ENCODE measurements at regions of chr12 and their contacts with region 1.

Region 1: GRCh38 chr12:111405149-111405860 is 418 bp upstream of the SH2B3 start:
- DNase-seq: peak; percentile 99
- H3K4me3 Mint-ChIP-seq: peak overlapping the region; percentile 73
- H3K27ac Mint-ChIP-seq: peak overlapping the region; percentile 94
- H3K4me1 Mint-ChIP-seq: peaks cover 52% of the 10 kb centered on the region
- H3K27me3 Mint-ChIP-seq: peaks cover 4% of the 10 kb centered on the region

Region 2: GRCh38 chr12:111322336-111323250 is 82.7 kb before region 1 on chr12:
- CTCF ChIA-PET with region 1: no interaction called
- POLR2A ChIA-PET with region 1: no interaction called
- intact Hi-C with region 1: no loop called
- DNase-seq: no peak
- H3K4me3 Mint-ChIP-seq: no peak overlapping the region
- H3K27ac Mint-ChIP-seq: no peak overlapping the region
- H3K4me1 Mint-ChIP-seq: no peaks in the 10 kb centered on the region
- H3K27me3 Mint-ChIP-seq: no peaks in the 10 kb centered on the region

Region 3: DNA sequence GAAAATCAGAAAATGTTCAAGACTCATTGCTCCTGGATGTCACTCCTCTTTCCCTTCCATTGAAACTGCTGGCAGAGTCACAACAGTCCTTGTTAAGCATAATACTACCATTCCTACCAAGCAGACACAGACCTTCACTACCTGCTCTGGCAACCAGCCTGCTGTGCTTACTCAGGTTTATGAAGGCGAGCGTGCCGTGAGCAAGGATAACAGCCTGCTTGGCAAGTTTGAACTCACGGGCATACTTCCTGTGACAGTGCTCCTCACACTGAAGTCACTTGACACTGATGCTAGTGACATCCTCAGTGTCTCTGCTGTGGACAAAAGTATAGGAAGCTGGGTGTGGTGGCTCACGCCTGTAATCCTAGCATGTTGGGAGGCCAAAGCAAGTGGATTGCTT is 20.7 kb before region 1 on chr12:
- CTCF ChIA-PET with region 1: no interaction called
- POLR2A ChIA-PET with region 1: no interaction called
- intact Hi-C with region 1: no loop called
- DNase-seq: no peak
- H3K4me3 Mint-ChIP-seq: no peak overlapping the region
- H3K27ac Mint-ChIP-seq: no peak overlapping the region
- H3K4me1 Mint-ChIP-seq: no peaks in the 10 kb centered on the region
- H3K27me3 Mint-ChIP-seq: peaks cover 5% of the 10 kb centered on the region

Region 4: DNA sequence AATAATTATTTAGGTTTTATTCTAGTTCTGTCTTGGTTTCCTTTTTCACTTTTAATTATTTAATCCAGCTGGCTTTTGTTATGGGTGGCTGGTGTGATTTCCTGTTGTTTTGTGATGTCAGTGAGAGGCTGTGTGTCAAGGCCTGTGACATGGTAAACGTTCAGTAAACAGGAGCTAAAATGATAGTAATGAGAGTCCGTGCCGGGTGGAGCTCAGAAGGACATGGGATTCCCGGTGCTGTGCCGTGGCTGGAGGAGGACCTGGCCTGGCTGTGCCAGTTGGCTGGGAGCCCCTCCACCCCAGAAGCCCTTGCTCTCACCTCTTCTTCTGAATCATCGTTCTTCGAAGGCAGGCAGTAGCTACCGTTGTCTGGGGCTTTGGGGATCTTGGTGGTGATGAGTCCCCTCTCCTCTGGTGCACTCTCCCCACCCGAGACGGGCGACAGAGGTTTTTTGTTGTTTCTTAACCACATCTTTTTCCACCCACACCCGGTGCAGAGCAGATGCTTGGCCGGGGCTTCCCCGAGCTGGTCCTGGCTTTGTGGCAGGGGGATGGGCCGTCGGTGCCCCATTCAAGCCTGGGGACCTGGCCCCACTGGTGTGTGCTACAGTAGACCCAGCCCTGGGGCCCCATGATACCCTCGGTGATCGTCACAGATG is 29.5 kb after region 1 on chr12:
- CTCF ChIA-PET with region 1: interaction called, 1,161 read pairs
- POLR2A ChIA-PET with region 1: interaction called, 28 read pairs
- intact Hi-C with region 1: loop called (anchors 1 kb)
- DNase-seq: peak; percentile 91
- H3K4me3 Mint-ChIP-seq: peak overlapping the region; percentile 61
- H3K27ac Mint-ChIP-seq: peak overlapping the region; percentile 92
- H3K4me1 Mint-ChIP-seq: peaks cover 89% of the 10 kb centered on the region
- H3K27me3 Mint-ChIP-seq: no peaks in the 10 kb centered on the region

Region 5: DNA sequence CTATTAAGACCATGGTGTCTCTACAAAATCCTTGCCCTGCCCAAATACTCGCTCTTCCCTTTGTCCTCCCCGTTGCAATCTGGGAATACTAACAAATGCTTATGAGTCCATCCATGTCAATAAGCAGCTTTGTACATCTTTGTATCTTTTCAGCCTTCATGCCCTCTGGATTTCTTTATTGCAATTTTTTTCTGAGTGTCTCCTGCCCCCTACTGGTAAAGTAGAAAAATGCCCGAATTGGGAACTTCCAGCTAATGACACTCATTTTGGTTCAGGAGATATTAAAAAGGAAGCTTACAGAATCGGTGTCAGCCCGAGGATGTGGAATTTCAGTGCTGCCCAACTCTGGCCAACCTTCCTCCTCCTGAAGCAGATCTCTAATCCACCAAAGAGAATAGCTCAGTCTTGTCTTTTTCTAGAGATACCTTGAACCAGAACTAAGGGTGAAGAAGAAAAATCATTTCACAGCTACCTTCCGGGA is 46.4 kb after region 1 on chr12:
- CTCF ChIA-PET with region 1: interaction called, 1,161 read pairs
- POLR2A ChIA-PET with region 1: interaction called, 91 read pairs
- intact Hi-C with region 1: loop called (anchors 1 kb)
- DNase-seq: no peak
- H3K4me3 Mint-ChIP-seq: no peak overlapping the region
- H3K27ac Mint-ChIP-seq: peak overlapping the region; percentile 4
- H3K4me1 Mint-ChIP-seq: peaks cover 42% of the 10 kb centered on the region
- H3K27me3 Mint-ChIP-seq: no peaks in the 10 kb centered on the region

Region 6: DNA sequence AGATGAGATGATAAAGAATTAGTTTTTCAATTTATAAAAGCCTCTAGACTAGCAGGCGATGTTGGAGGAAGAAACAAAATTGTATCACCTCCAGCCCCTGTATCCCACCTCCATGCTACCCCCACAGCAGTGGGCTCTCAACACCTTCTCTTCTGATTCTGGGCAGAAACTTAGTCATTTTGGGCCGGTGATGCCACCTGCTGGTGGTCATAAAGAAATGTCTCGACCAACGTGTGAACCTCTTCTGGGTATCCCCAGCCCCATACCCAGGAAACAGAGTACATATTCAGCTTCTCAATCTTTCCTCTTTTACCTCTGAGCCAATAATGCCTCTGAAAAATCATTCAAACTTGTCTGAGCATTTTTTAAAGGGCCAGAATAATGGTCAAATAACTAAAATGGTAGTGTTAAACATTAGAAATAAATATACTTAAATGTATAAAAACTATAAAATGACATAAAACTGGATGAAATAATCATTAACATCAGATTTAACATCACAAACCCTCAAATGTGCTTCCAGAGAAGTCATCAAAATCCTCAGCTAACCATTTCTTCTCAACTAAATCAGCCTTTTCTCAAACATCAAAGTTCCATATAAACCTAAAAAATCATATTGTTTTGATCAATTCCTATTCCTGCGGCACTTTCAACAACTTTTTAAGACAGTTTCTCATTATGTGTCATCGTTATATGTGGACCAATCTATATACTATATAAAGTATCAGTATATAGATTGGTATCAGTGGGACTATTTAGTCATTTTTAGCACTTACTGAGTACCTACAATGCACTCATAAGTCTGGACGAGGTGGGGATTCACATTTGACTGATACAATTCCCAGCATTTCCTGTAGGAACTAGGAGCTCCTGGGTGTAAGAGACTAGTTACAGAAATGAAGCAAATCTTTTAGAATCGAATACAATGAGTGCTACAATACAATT is 124.4 kb after region 1 on chr12:
- CTCF ChIA-PET with region 1: interaction called, 3 read pairs
- POLR2A ChIA-PET with region 1: no interaction called
- intact Hi-C with region 1: loop called (anchors 1 kb)
- DNase-seq: peak; percentile 78
- H3K4me3 Mint-ChIP-seq: no peak overlapping the region
- H3K27ac Mint-ChIP-seq: peak overlapping the region; percentile 44
- H3K4me1 Mint-ChIP-seq: peaks cover 12% of the 10 kb centered on the region
- H3K27me3 Mint-ChIP-seq: no peaks in the 10 kb centered on the region

Region 7: DNA sequence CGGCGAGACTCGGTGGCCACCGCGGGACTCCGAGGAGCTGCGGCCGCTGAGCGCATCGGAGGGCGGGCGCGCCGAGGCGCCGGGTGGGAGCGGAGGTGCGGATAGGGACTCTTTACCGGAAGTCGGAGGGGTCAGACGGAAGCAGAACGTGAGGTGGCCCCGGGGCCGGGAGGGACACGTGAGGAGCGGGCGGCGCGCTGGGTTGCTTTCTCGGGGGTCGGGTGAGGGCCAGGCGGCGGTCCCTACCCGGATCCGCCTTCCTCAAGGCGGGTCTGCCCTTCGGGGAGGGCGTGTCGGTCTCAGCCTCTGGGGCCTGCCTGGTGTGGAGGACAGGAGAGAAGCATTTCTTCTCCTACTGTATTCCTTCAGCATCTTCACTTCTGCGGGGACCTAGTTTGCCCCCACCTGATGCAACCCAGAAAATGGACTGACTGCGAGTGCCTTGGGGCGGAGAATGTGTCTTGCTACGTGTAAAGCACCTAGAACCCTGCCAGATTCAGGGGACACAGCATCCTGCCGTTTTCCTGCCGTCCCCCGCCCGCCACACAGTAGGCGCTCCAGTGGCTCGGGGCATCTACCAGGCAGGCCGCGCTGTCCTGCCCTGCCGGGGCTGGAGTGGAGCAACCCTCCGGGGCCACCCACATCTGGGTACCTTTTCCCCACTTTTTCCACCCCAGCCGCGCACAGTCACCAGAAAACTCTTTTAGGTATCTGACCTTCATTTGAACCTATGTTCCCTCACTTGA is 194.3 kb after region 1 on chr12:
- CTCF ChIA-PET with region 1: no interaction called
- POLR2A ChIA-PET with region 1: no interaction called
- intact Hi-C with region 1: loop called (anchors 5 kb)
- DNase-seq: peak; percentile 89
- H3K4me3 Mint-ChIP-seq: peak overlapping the region; percentile 85
- H3K27ac Mint-ChIP-seq: peak overlapping the region; percentile 89
- H3K4me1 Mint-ChIP-seq: peaks cover 26% of the 10 kb centered on the region
- H3K27me3 Mint-ChIP-seq: no peaks in the 10 kb centered on the region